OCI-LY7 (cell line): ENCODE measurements at regions of chr7 and their contacts with region 1.

Region 1: DNA sequence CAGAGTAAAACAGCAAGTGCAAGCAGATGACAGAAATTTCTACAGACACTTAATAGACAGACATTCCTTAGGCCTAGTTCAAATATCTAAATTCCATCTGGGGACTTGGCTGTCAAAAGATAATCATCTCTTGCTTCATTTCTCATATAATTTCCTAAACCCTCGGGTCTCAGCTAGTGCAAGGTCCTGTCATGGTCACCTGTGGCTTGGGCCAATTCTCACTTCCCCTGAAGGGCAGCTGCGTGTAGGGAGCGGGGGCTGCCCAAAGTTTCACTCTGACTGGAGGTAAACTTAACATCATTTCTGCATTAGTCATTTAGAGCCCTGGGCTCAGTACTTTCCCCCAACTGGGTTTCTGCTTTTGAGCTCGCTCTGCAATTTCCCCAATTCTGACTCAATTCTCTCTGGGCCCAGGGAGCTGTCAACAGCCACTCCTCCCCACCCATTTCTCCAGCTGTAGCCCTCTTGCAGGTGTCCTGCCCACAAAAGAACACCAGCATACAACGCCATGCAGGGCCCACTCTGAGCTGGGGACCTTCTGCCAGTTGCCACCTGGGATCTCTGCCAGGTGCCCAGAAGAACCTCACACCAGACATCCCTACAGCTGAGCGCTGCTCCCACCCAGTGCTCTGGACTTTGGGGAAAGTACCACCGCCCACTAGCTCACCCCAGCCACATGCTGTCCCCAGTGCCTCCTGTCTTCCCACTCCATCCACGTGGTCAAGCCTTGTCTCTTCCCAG is 38.0 kb downstream of the VOPP1 start:
- DNase-seq: peak; percentile 96
- H3K4me3 ChIP-seq: peak overlapping the region; percentile 58
- H3K27ac ChIP-seq: peak overlapping the region; percentile 100
- H3K4me1 ChIP-seq: peaks cover 96% of the 10 kb centered on the region
- CTCF ChIP-seq: no peak

Region 2: GRCh38 chr7:55432939-55433784 is 101.2 kb before region 1 on chr7:
- CTCF ChIA-PET with region 1: no interaction called
- POLR2A ChIA-PET with region 1: no interaction called
- intact Hi-C with region 1: loop called (anchors 5 kb)
- DNase-seq: peak; percentile 72
- H3K4me3 ChIP-seq: no peak overlapping the region
- H3K27ac ChIP-seq: no peak overlapping the region
- H3K4me1 ChIP-seq: no peaks in the 10 kb centered on the region
- CTCF ChIP-seq: peak; percentile 91

Region 3: GRCh38 chr7:55546829-55547228 is 12.5 kb after region 1 on chr7:
- CTCF ChIA-PET with region 1: interaction called, 4 read pairs
- POLR2A ChIA-PET with region 1: interaction called, 15 read pairs
- intact Hi-C with region 1: loop called (anchors 1 kb)
- DNase-seq: no peak
- H3K4me3 ChIP-seq: no peak overlapping the region
- H3K27ac ChIP-seq: no peak overlapping the region
- H3K4me1 ChIP-seq: peaks cover 51% of the 10 kb centered on the region
- CTCF ChIP-seq: no peak

Region 4: GRCh38 chr7:55557666-55558188 is 23.4 kb after region 1 on chr7:
- CTCF ChIA-PET with region 1: interaction called, 8 read pairs
- POLR2A ChIA-PET with region 1: interaction called, 12 read pairs
- intact Hi-C with region 1: loop called (anchors 2 kb)
- DNase-seq: peak; percentile 68
- H3K4me3 ChIP-seq: peak overlapping the region; percentile 48
- H3K27ac ChIP-seq: peak overlapping the region; percentile 73
- H3K4me1 ChIP-seq: peaks cover 83% of the 10 kb centered on the region
- CTCF ChIP-seq: no peak

Region 5: GRCh38 chr7:55622241-55622640 is 87.9 kb after region 1 on chr7:
- CTCF ChIA-PET with region 1: no interaction called
- POLR2A ChIA-PET with region 1: no interaction called
- intact Hi-C with region 1: no loop called
- DNase-seq: no peak
- H3K4me3 ChIP-seq: no peak overlapping the region
- H3K27ac ChIP-seq: no peak overlapping the region
- H3K4me1 ChIP-seq: no peaks in the 10 kb centered on the region
- CTCF ChIP-seq: no peak

Region 6: DNA sequence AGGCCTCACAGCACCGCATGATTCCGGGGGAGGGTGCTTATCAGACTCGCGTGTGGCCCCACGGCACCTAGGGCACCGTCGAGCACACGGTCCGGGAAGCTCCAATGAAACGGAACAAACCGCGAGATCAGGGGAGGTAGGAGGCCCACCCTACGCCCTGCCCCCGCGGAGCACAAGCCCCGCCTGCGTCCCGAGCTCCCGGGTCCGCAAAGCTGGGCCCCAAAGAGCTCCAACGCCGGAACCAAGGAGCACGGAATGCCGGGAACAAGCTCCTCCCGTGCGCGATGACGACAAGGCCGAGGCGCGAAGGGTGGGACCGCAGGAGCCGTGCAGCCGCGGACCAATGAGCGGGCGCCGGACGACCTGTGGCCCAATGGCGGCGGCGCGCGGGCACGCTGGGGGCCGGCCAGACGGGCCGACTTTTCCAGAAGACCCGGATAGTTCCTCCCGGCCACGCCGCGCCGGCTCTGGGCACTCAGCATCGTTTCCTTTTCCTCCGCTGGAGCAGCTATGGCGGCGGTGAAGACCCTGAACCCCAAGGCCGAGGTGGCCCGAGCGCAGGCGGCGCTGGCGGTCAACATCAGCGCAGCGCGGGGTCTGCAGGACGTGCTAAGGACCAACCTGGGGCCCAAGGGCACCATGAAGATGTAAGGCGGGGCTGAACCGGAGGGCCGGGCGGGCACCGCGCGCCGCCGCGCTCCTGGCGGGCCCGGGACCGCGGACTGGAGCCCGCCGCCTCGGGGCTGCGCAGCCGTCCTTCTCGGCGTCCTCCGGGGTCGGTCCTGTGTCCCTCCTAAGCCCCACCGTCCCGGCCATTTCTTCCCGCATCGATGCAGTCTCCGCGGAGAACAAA is 517.2 kb after region 1 on chr7 and contains the starts of genes CCT6A and PSPH:
- CTCF ChIA-PET with region 1: no interaction called
- POLR2A ChIA-PET with region 1: no interaction called
- intact Hi-C with region 1: loop called (anchors 5 kb)
- DNase-seq: peak; percentile 97
- H3K4me3 ChIP-seq: peak within 1 kb of the TSS; percentile 100
- H3K27ac ChIP-seq: peak within 1 kb of the TSS; percentile 66
- H3K4me1 ChIP-seq: peaks cover 58% of the 10 kb centered on the region
- CTCF ChIP-seq: no peak
- total RNA-seq, gene CCT6A: 151 and 196 TPM in 2 replicates
- total RNA-seq, gene PSPH: 62.9 and 64.7 TPM in 2 replicates